Mammary epithelial cell (primary cell): ENCODE measurements at regions of chr9 and their contacts with region 1.

Region 1: GRCh38 chr9:37422289-37423104 is at the start of gene GRHPR:
- DNase-seq: peak; percentile 77
- H3K4me3 ChIP-seq: peak within 1 kb of the TSS; percentile 77 to 95 (median 93)
- H3K27ac ChIP-seq: peak within 1 kb of the TSS; percentile 87
- H3K4me1 ChIP-seq: peaks cover 27% of the 10 kb centered on the region
- H3K27me3 ChIP-seq: no peaks in the 10 kb centered on the region
- CTCF ChIP-seq: no peak
- total RNA-seq, gene GRHPR: 87.0 to 163 TPM

Region 2: GRCh38 chr9:36798350-36799065 is 624.0 kb before region 1 on chr9:
- CTCF ChIA-PET with region 1: no interaction called
- dilution Hi-C with region 1: no loop called
- in situ Hi-C with region 1: loop called in 1 of 2 experiments (anchors 25 kb)
- intact Hi-C with region 1: no loop called
- DNase-seq: no peak
- H3K4me3 ChIP-seq: no peak overlapping the region
- H3K27ac ChIP-seq: no peak overlapping the region
- H3K4me1 ChIP-seq: no peaks in the 10 kb centered on the region
- H3K27me3 ChIP-seq: peaks cover 4% of the 10 kb centered on the region
- CTCF ChIP-seq: peak; percentile 5 to 23

Region 3: DNA sequence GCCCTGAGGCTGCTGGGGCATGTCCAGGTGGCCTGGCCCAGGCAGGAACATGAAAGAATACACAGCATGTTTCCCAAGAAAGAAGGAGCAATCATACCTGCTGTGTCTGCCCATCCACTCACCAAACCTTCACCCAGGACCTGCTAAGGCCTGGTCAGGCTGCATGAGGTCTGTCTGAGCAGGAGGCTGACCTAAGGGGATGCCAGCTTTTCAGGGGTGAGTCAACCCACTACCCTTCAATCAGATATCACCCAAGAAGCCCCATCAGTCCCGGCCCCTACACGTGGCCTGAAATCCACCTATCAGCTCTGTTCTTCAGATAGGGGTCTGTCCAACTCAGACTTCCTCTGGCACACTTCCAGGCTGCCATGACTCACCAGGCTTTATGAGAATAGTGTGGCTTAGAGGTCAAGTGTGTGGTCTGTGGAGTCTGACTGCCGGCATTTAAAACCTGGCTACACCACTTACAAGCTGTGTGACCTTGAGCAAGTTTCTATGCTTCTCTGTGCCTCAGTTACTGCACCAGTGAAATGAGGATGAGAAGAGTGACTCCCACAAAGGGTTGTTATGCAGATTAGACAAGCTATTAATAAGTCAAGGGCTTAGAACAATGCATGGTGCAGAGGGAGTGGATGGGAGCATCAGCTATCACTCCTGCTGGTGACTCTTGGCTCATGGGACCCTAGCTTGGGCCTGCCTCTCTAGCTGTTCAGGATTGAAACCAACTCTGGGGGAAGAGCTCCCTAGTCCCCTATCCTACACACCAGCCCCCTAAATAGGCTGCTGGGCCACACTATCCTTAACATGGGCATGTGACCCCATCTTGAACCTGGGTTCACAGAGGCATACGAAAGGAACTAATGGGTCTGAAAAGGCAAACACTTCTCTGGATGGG is 518.7 kb before region 1 on chr9:
- CTCF ChIA-PET with region 1: no interaction called
- dilution Hi-C with region 1: no loop called
- in situ Hi-C with region 1: no loop called
- intact Hi-C with region 1: no loop called
- DNase-seq: peak; percentile 73
- H3K4me3 ChIP-seq: no peak overlapping the region
- H3K27ac ChIP-seq: no peak overlapping the region
- H3K4me1 ChIP-seq: peaks cover 10% of the 10 kb centered on the region
- H3K27me3 ChIP-seq: peaks cover 19% of the 10 kb centered on the region
- CTCF ChIP-seq: no peak

Region 4: GRCh38 chr9:37455884-37456647 is 33.6 kb after region 1 on chr9:
- CTCF ChIA-PET with region 1: no interaction called
- dilution Hi-C with region 1: no loop called
- in situ Hi-C with region 1: no loop called
- intact Hi-C with region 1: loop called (anchors 5 kb)
- DNase-seq: peak; percentile 48
- H3K4me3 ChIP-seq: no peak overlapping the region
- H3K27ac ChIP-seq: no peak overlapping the region
- H3K4me1 ChIP-seq: peaks cover 34% of the 10 kb centered on the region
- H3K27me3 ChIP-seq: no peaks in the 10 kb centered on the region
- CTCF ChIP-seq: no peak